CD4-positive, alpha-beta T cell (primary cell): ENCODE measurements at regions of chr11 and their contacts with region 1.

Region 1: GRCh38 chr11:94973099-94973968 is at the starts of genes CWC15 and KDM4D:
- DNase-seq: peak; percentile 89 to 97 (median 92)
- ATAC-seq: peak; percentile 99
- H3K4me3 ChIP-seq: peak within 1 kb of the TSS; percentile 89
- H3K4me3 Mint-ChIP-seq: peak within 1 kb of the TSS; percentile 99
- H3K27ac ChIP-seq: peak within 1 kb of the TSS; percentile 68 to 77
- H3K27ac Mint-ChIP-seq: peak within 1 kb of the TSS; percentile 92
- H3K4me1 ChIP-seq: no peaks in the 10 kb centered on the region
- H3K4me1 Mint-ChIP-seq: peaks cover 42% of the 10 kb centered on the region
- H3K27me3 ChIP-seq: no peaks in the 10 kb centered on the region
- H3K27me3 Mint-ChIP-seq: no peaks in the 10 kb centered on the region
- CTCF ChIP-seq: no peak
- total RNA-seq, gene CWC15: 121 to 124 TPM
- total RNA-seq, gene KDM4D: 0.16 to 0.22 TPM

Region 2: DNA sequence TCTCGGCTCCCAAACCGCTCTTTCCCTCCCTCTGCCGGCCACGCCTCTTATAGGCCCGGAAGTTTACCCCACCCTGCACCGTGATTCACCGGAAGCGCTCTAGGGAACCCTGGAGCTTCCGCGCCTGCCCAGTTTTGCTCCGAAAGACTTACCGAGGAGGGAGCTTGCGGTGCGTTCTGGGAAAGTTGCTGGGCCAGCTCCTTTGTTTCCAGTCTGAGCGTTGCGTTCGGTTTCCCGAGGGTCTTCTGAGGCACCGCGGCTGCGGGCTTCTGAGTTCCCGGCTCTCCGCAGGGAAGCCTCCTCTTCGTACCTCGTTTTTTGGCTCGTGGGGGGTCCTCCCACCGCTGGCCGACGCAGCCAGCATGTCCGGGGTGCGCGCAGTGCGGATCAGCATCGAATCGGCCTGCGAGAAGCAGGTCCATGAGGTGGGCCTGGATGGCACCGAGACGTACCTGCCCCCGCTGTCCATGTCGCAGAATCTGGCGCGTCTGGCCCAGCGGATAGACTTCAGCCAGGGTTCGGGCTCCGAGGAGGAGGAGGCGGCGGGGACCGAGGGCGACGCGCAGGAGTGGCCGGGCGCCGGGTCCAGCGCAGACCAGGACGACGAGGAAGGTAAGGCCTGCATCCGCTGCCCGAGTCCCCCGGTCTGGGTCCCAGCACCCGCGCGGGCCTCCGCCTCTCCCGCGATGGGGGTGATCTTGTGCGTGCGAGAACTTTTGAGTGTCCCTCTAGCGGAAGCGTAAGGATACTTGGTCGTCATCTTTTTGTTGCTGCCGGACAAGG is 1189.0 kb before region 1 on chr11 and contains the start of gene MED17:
- CTCF ChIA-PET with region 1: no interaction called
- POLR2A ChIA-PET with region 1: interaction called, 3 read pairs
- intact Hi-C with region 1: loop called in 1 of 2 experiments (anchors 10 kb)
- DNase-seq: peak; percentile 79 to 95 (median 86)
- ATAC-seq: peak; percentile 96
- H3K4me3 ChIP-seq: peak within 1 kb of the TSS; percentile 97
- H3K4me3 Mint-ChIP-seq: peak within 1 kb of the TSS; percentile 89
- H3K27ac ChIP-seq: peak within 1 kb of the TSS; percentile 86 to 90
- H3K27ac Mint-ChIP-seq: peak within 1 kb of the TSS; percentile 81
- H3K4me1 ChIP-seq: peaks cover 32% of the 10 kb centered on the region
- H3K4me1 Mint-ChIP-seq: peaks cover 53% of the 10 kb centered on the region
- H3K27me3 ChIP-seq: no peaks in the 10 kb centered on the region
- H3K27me3 Mint-ChIP-seq: no peaks in the 10 kb centered on the region
- CTCF ChIP-seq: no peak
- total RNA-seq, gene MED17: 63.1 to 63.6 TPM

Region 3: DNA sequence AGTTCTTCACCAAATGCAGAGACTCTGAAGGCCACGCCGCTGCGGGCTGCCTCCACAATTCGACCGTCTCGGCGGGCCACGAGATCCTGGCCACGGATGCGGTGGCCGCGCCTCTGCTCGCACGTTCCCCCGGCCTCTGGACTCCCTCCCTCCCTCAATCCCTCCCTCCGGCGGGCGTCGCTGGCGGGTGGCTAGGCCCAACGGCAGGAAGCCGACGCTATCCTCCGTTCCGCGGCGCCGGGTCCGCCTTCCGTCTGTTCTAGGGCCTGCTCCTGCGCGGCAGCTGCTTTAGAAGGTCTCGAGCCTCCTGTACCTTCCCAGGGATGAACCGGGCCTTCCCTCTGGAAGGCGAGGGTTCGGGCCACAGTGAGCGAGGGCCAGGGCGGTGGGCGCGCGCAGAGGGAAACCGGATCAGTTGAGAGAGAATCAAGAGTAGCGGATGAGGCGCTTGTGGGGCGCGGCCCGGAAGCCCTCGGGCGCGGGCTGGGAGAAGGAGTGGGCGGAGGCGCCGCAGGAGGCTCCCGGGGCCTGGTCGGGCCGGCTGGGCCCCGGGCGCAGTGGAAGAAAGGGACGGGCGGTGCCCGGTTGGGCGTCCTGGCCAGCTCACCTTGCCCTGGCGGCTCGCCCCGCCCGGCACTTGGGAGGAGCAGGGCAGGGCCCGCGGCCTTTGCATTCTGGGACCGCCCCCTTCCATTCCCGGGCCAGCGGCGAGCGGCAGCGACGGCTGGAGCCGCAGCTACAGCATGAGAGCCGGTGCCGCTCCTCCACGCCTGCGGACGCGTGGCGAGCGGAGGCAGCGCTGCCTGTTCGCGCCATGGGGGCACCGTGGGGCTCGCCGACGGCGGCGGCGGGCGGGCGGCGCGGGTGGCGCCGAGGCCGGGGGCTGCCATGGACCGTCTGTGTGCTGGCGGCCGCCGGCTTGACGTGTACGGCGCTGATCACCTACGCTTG is 429.4 kb before region 1 on chr11 and contains the start of gene FUT4:
- CTCF ChIA-PET with region 1: no interaction called
- POLR2A ChIA-PET with region 1: interaction called, 3 read pairs
- intact Hi-C with region 1: loop called in 1 of 2 experiments (anchors 5 kb)
- DNase-seq: peak; percentile 46 to 84 (median 62)
- ATAC-seq: peak; percentile 79
- H3K4me3 ChIP-seq: peak within 1 kb of the TSS; percentile 82
- H3K4me3 Mint-ChIP-seq: peak within 1 kb of the TSS; percentile 99
- H3K27ac ChIP-seq: peak within 1 kb of the TSS; percentile 61 to 93
- H3K27ac Mint-ChIP-seq: peak within 1 kb of the TSS; percentile 95
- H3K4me1 ChIP-seq: peaks cover 33% of the 10 kb centered on the region
- H3K4me1 Mint-ChIP-seq: peaks cover 51% of the 10 kb centered on the region
- H3K27me3 ChIP-seq: no peaks in the 10 kb centered on the region
- H3K27me3 Mint-ChIP-seq: no peaks in the 10 kb centered on the region
- CTCF ChIP-seq: peak; percentile 5
- total RNA-seq, gene FUT4: 4.3 to 5.1 TPM

Region 4: DNA sequence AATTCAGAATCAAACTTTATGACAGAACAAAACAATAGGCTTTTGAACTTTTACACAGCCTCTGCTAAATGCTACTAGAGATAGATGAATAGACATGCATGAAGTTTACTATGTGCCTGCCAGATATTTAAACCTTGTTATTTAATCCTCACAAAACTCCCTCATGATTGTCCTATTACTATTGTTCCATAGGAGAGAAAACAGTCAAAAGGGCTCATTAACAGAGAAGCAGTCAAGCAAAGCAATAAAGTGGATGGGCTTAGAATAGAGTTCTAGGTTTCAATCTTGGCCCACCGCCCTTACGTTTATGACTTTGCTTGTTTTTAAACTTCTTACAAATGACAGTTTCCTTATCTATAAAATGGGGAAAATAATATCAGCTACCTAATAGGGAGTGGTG is 12.8 kb before region 1 on chr11:
- CTCF ChIA-PET with region 1: no interaction called
- POLR2A ChIA-PET with region 1: interaction called, 16 read pairs
- intact Hi-C with region 1: no loop called
- DNase-seq: no peak
- ATAC-seq: no peak
- H3K4me3 ChIP-seq: no peak overlapping the region
- H3K4me3 Mint-ChIP-seq: no peak overlapping the region
- H3K27ac ChIP-seq: no peak overlapping the region
- H3K27ac Mint-ChIP-seq: no peak overlapping the region
- H3K4me1 ChIP-seq: no peaks in the 10 kb centered on the region
- H3K4me1 Mint-ChIP-seq: peaks cover 3% of the 10 kb centered on the region
- H3K27me3 ChIP-seq: no peaks in the 10 kb centered on the region
- H3K27me3 Mint-ChIP-seq: no peaks in the 10 kb centered on the region
- CTCF ChIP-seq: no peak

Region 5: DNA sequence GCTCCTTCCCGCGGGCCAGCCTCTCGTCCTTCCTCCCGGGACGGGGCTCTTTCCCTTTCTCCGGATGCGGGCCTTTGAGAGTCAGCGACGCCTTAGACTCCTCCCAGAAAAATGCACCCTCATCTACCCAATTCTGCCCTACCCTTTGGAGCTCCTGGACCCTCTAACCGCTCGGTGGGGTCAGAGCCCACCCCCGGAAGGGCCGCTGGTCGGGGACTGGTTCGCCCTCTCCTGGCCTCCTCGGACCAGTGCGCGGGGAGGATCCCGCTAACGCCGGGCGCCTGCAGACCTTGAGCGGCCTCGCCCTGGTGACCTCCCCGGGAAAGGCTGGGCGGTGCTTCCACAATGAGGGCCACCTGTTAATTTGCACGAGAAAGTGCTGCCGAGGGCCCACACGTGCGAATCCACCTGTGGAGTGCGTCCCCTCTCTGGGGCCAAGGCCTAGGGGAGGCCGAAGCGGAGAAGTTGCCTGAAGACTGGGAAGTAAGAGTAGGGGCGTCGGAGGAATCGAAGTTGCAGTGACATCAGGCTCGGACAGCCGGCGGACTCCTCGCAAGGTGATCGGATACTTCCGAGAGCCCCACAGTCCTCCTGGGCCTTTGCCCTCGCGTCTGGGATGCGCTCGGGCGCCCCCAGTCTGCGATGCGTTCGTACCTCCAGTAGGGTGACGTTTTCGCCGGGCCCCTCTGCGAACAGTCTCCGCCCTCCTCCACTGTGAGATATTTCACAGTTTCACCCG is 177.8 kb after region 1 on chr11:
- CTCF ChIA-PET with region 1: no interaction called
- POLR2A ChIA-PET with region 1: no interaction called
- intact Hi-C with region 1: loop called in 1 of 2 experiments (anchors 5 kb)
- DNase-seq: peak; percentile 83 to 96 (median 88)
- ATAC-seq: peak; percentile 92
- H3K4me3 ChIP-seq: peak overlapping the region; percentile 74
- H3K4me3 Mint-ChIP-seq: peak overlapping the region; percentile 92
- H3K27ac ChIP-seq: peak overlapping the region; percentile 69 to 72
- H3K27ac Mint-ChIP-seq: peak overlapping the region; percentile 97
- H3K4me1 ChIP-seq: peaks cover 49% of the 10 kb centered on the region
- H3K4me1 Mint-ChIP-seq: peaks cover 37% of the 10 kb centered on the region
- H3K27me3 ChIP-seq: no peaks in the 10 kb centered on the region
- H3K27me3 Mint-ChIP-seq: peaks cover 4% of the 10 kb centered on the region
- CTCF ChIP-seq: peak; percentile 97

Region 6: GRCh38 chr11:96389720-96390487 is 1416.6 kb after region 1 on chr11 and contains the starts of genes CCDC82 and JRKL:
- CTCF ChIA-PET with region 1: no interaction called
- POLR2A ChIA-PET with region 1: interaction called, 3 read pairs
- intact Hi-C with region 1: loop called in 1 of 2 experiments (anchors 5 kb)
- DNase-seq: peak; percentile 96 to 99 (median 98)
- ATAC-seq: peak; percentile 96
- H3K4me3 ChIP-seq: peak within 1 kb of the TSS; percentile 86
- H3K4me3 Mint-ChIP-seq: peak within 1 kb of the TSS; percentile 91
- H3K27ac ChIP-seq: peak within 1 kb of the TSS; percentile 84
- H3K27ac Mint-ChIP-seq: peak within 1 kb of the TSS; percentile 88
- H3K4me1 ChIP-seq: peaks cover 18% of the 10 kb centered on the region
- H3K4me1 Mint-ChIP-seq: peaks cover 51% of the 10 kb centered on the region
- H3K27me3 ChIP-seq: no peaks in the 10 kb centered on the region
- H3K27me3 Mint-ChIP-seq: no peaks in the 10 kb centered on the region
- CTCF ChIP-seq: no peak
- total RNA-seq, gene CCDC82: 23.7 to 24.4 TPM
- total RNA-seq, gene JRKL: 3.0 to 3.5 TPM